ENCODE measurements at regions of chr6 and their contacts with region 1.

Region 1: DNA sequence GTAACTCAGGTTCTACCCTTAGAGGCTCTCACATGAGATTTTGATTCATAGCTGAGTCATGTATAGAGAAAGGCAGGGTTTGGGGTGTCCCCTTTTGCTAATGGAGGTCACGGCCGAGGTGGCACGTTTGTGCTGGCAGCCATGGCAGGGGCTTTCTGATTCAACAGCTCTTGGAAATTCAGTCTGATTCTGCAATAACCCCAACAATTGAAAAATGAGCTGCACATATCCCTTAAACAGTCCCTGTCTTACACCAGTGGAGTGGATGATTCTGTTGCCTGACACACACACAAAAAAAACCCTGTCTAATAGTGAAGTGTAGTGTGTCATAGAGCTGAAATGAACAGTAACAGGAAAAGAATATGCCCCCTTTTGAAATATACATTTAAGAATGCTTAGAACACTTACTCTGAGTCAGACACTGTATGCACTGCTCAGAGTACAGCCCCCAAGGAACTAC is 40.4 kb upstream of the ARG1 start:
- DNase-seq: no peak
- H3K4me3 ChIP-seq: no peak overlapping the region
- H3K27ac ChIP-seq: no peak overlapping the region
- H3K4me1 ChIP-seq: no peaks in the 10 kb centered on the region
- H3K27me3 ChIP-seq: no peaks in the 10 kb centered on the region
- CTCF ChIP-seq: no peak
- POLR2A ChIP-seq: no peak

Region 2: GRCh38 chr6:130885392-130886192 is 647.0 kb before region 1 on chr6:
- intact Hi-C with region 1: loop called (anchors 10 kb)
- DNase-seq: no peak
- H3K4me3 ChIP-seq: no peak overlapping the region
- H3K27ac ChIP-seq: no peak overlapping the region
- H3K4me1 ChIP-seq: peaks cover 0 to 5% (median 0%) of the 10 kb centered on the region in 3 donors
- H3K27me3 ChIP-seq: no peaks in the 10 kb centered on the region
- CTCF ChIP-seq: peak; percentile 76 to 93 (median 88)
- POLR2A ChIP-seq: no peak

Region 3: GRCh38 chr6:131182991-131183425 is 349.6 kb before region 1 on chr6:
- intact Hi-C with region 1: loop called (anchors 10 kb)
- DNase-seq: no peak
- H3K4me3 ChIP-seq: no peak overlapping the region
- H3K27ac ChIP-seq: no peak overlapping the region
- H3K4me1 ChIP-seq: no peaks in the 10 kb centered on the region
- H3K27me3 ChIP-seq: no peaks in the 10 kb centered on the region
- CTCF ChIP-seq: peak in 4 of 6 experiments; percentile 17 to 45 (median 28)
- POLR2A ChIP-seq: no peak

Region 4: DNA sequence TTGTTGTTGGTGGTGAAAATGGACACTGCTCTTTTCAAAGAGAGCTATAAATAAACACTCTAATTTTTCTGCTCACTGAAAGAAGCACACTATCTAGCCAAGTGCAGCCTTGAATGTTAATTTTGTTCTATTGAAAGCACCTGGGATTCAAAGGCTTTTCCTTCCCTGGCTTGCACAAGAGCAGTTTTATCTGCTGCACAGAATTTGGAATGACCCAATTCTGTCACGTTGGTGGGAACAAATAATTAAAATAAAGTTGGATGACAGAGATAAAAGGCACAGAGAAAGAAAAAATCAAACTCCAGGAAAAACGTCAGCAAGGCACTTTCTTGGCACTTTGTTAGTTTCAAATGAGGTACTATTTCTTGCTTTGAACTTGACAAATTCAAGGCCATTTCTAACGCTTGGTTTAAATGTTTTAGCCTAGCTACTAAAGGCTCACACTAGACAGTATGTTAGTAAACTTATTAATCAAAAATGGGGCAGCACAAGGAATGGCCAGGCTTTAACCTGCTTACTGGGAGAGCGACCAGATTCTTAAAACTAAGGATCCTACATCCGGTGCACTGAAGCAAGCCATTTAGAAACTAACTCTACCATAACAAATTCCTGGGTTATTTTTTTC is 105.1 kb before region 1 on chr6:
- intact Hi-C with region 1: no loop called
- DNase-seq: no peak
- H3K4me3 ChIP-seq: no peak overlapping the region
- H3K27ac ChIP-seq: no peak overlapping the region
- H3K4me1 ChIP-seq: no peaks in the 10 kb centered on the region
- H3K27me3 ChIP-seq: peaks cover 0 to 10% (median 0%) of the 10 kb centered on the region in 4 donors
- CTCF ChIP-seq: no peak
- POLR2A ChIP-seq: no peak